CD8-positive, alpha-beta T cell (primary cell): ENCODE measurements at regions of chr2 and their contacts with region 1.

Region 1: GRCh38 chr2:20350753-20351554 is at the start of gene PUM2:
- DNase-seq: peak; percentile 89 to 99 (median 96)
- ATAC-seq: peak; percentile 79
- H3K4me3 ChIP-seq: peak within 1 kb of the TSS; percentile 75 to 82
- H3K4me3 Mint-ChIP-seq: no peak within 1 kb of the TSS
- H3K27ac ChIP-seq: peak within 1 kb of the TSS; percentile 89 to 94
- H3K27ac Mint-ChIP-seq: peak within 1 kb of the TSS; percentile 82
- H3K4me1 ChIP-seq: peaks cover 47% of the 10 kb centered on the region
- H3K4me1 Mint-ChIP-seq: peaks cover 39% of the 10 kb centered on the region
- H3K27me3 ChIP-seq: no peaks in the 10 kb centered on the region
- H3K27me3 Mint-ChIP-seq: no peaks in the 10 kb centered on the region
- CTCF ChIP-seq: no peak
- total RNA-seq, gene PUM2: 91.3 to 93.5 TPM

Region 2: DNA sequence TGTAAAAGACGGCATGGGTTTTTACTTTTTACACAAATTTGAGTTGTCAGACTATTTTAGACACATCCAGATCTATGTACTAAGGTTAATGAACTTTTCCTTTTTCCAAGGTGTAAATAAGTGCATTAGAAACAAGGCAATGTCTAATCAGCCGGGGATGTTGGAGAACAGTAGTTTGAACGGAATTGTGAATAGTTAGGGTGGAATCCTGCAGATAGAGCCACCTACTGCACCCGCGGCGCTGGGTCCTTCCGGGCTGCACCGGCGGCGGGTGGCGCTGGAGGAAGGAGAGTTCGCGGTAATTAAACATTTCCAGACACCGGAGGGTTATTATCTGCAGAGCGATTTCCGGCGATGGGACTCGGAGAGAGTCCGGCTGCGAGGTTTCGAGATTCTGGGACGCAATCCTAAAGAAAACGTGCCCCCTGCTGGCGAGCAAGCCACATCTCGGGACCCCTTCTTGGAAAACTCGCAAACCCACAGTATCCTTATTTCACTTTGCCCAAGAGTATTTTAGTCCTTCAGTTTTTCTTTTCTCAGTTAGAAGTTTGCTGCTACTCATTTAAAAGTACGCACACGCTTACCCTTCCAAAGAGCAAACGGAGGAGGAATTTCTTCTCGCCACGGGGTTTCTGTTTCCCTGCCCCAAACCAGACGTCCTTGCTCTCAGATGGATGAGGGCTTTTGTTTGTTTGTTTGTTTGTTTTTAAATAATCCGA is 988.0 kb before region 1 on chr2:
- CTCF ChIA-PET with region 1: no interaction called
- POLR2A ChIA-PET with region 1: no interaction called
- intact Hi-C with region 1: loop called in 1 of 2 experiments (anchors 5 kb)
- DNase-seq: peak in 6 of 9 experiments; percentile 29 to 74 (median 52)
- ATAC-seq: peak; percentile 48
- H3K4me3 ChIP-seq: peak overlapping the region; percentile 67 to 70
- H3K4me3 Mint-ChIP-seq: peak overlapping the region; percentile 93
- H3K27ac ChIP-seq: no peak overlapping the region
- H3K27ac Mint-ChIP-seq: peak overlapping the region; percentile 68
- H3K4me1 ChIP-seq: peaks cover 36% of the 10 kb centered on the region
- H3K4me1 Mint-ChIP-seq: peaks cover 37% of the 10 kb centered on the region
- H3K27me3 ChIP-seq: peaks cover 28 to 33% of the 10 kb centered on the region in 2 experiments
- H3K27me3 Mint-ChIP-seq: peaks cover 33% of the 10 kb centered on the region
- CTCF ChIP-seq: peak; percentile 38

Region 3: DNA sequence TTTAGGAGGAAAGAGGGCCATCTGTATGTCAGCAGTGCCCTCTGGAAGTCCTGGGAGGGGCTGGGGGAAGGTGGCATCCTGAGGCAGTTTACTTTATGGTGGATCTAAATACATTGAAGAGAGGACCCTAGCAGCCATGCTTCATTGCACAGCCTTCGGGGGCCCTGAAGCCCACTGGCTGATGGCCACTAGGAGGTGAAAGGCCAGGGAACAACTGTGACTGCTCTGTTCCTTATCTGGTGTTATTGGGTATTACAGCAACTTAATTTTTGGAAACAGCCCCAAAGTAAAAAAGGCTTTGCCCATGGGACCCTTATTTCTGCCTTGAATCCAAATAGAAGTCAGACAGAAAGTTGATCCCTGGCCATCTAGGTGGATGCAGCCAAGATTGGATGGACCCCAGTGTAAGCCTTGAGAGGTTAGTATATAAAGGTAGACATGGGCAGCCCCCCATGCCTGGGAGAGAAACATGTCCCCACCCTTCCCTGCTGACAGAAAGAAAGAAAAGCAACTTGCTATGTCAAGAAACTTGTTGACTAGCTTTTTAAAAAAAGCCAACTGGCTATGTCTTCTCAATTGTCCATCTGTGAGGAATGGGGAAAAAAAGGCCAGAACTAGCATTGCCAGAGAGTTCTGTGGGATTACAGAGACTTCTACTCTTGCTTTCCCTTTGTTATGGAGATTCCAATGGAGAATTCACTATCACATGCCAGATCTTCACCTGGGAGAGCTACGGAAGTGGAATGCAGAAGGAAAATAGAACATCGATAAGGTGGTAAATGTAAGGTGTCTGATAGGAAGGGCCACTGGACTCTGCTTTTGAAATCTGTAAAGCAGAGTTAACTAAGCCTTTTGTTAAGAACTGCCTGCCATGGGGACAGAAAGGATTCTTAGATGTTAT is 933.9 kb before region 1 on chr2:
- CTCF ChIA-PET with region 1: no interaction called
- POLR2A ChIA-PET with region 1: no interaction called
- intact Hi-C with region 1: no loop called
- DNase-seq: no peak
- ATAC-seq: no peak
- H3K4me3 ChIP-seq: no peak overlapping the region
- H3K4me3 Mint-ChIP-seq: no peak overlapping the region
- H3K27ac ChIP-seq: no peak overlapping the region
- H3K27ac Mint-ChIP-seq: no peak overlapping the region
- H3K4me1 ChIP-seq: no peaks in the 10 kb centered on the region
- H3K4me1 Mint-ChIP-seq: no peaks in the 10 kb centered on the region
- H3K27me3 ChIP-seq: peaks cover 2 to 3% of the 10 kb centered on the region in 2 experiments
- H3K27me3 Mint-ChIP-seq: peaks cover 21% of the 10 kb centered on the region
- CTCF ChIP-seq: no peak

Region 4: DNA sequence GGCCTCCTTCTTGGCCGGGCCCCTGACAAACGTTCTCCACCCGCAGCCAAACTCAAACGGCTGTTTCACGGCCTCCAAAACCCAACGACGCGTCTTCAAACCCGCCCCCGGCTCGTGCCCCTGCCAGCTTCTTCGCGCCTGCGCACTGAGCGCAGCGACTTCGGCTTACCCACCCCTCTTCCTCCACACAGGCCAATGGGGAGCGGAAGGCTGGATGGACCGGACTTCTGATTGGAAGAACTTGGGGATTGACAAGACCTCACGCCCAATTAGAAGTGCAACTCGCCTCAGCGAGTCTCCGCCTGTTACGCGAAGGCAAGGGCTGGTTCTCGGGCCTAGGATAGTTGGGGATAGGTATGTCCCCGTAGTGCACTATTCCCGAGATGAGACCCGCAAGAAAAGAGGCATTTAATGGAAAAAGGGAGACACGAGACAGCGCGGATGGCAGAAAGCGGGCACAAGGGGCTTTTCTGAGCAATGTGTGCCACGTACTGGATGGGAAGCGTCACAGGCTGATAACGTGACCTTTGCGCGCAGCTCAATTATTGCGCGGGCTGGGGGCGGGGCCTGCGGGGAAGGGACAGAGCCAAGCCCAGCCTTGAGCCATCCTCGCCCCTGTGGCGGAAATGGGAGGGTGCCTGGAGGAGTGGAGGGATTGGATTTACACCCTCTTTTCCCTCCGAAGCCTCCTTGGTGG is 299.3 kb before region 1 on chr2 and contains the start of gene LAPTM4A:
- CTCF ChIA-PET with region 1: no interaction called
- POLR2A ChIA-PET with region 1: no interaction called
- intact Hi-C with region 1: loop called (anchors 1 to 10 kb)
- DNase-seq: peak; percentile 95 to 100 (median 97)
- ATAC-seq: peak; percentile 88
- H3K4me3 ChIP-seq: peak within 1 kb of the TSS; percentile 82 to 90
- H3K4me3 Mint-ChIP-seq: no peak within 1 kb of the TSS
- H3K27ac ChIP-seq: peak within 1 kb of the TSS; percentile 99
- H3K27ac Mint-ChIP-seq: no peak within 1 kb of the TSS
- H3K4me1 ChIP-seq: peaks cover 28% of the 10 kb centered on the region
- H3K4me1 Mint-ChIP-seq: peaks cover 31% of the 10 kb centered on the region
- H3K27me3 ChIP-seq: no peaks in the 10 kb centered on the region
- H3K27me3 Mint-ChIP-seq: peaks cover 19% of the 10 kb centered on the region
- CTCF ChIP-seq: no peak
- total RNA-seq, gene LAPTM4A: 92.4 to 98.8 TPM

Region 5: GRCh38 chr2:20326163-20326780 is 24.7 kb before region 1 on chr2:
- CTCF ChIA-PET with region 1: interaction called, 15 read pairs
- POLR2A ChIA-PET with region 1: interaction called, 6 read pairs
- intact Hi-C with region 1: loop called (anchors 1 kb)
- DNase-seq: peak in 8 of 9 experiments; percentile 19 to 71 (median 57)
- ATAC-seq: peak; percentile 84
- H3K4me3 ChIP-seq: no peak overlapping the region
- H3K4me3 Mint-ChIP-seq: no peak overlapping the region
- H3K27ac ChIP-seq: no peak overlapping the region
- H3K27ac Mint-ChIP-seq: peak overlapping the region; percentile 61
- H3K4me1 ChIP-seq: peaks cover 29% of the 10 kb centered on the region
- H3K4me1 Mint-ChIP-seq: peaks cover 76% of the 10 kb centered on the region
- H3K27me3 ChIP-seq: no peaks in the 10 kb centered on the region
- H3K27me3 Mint-ChIP-seq: no peaks in the 10 kb centered on the region
- CTCF ChIP-seq: peak; percentile 61

Region 6: DNA sequence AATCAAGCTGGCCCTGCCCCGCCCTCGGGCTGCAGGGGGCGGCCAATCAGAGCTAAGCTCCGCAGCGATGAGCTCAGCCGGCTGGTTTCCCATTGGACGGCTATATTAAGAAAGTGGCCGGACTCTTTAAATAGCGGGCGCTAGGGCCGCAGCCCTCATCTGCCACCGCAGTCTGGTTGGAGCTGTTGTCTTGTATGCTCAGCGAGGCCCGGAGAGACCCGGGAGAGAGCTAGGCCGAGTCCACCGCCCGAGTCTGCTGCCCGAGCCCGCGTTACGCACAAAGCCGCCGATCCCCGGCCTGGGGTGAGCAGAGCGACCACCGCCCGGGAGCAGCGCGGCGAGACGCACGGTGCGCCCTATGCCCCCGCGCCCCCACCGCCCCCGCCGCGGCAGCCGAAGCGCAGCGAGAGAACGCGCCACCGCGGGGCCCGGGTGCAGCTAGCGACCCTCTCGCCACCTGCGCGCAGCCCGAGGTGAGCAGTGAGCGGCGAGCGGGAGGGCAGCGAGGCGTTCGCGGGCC is 96.0 kb after region 1 on chr2 and contains the start of gene RHOB:
- CTCF ChIA-PET with region 1: interaction called, 3 read pairs
- POLR2A ChIA-PET with region 1: interaction called, 16 read pairs
- intact Hi-C with region 1: loop called (anchors 1 to 5 kb)
- DNase-seq: peak; percentile 77 to 97 (median 86)
- ATAC-seq: peak; percentile 96
- H3K4me3 ChIP-seq: peak within 1 kb of the TSS; percentile 71 to 77
- H3K4me3 Mint-ChIP-seq: peak within 1 kb of the TSS; percentile 85
- H3K27ac ChIP-seq: peak within 1 kb of the TSS; percentile 66 to 78
- H3K27ac Mint-ChIP-seq: peak within 1 kb of the TSS; percentile 57
- H3K4me1 ChIP-seq: peaks cover 17% of the 10 kb centered on the region
- H3K4me1 Mint-ChIP-seq: peaks cover 13% of the 10 kb centered on the region
- H3K27me3 ChIP-seq: peaks cover 0 to 7% of the 10 kb centered on the region in 2 experiments
- H3K27me3 Mint-ChIP-seq: peaks cover 10% of the 10 kb centered on the region
- CTCF ChIP-seq: no peak
- total RNA-seq, gene RHOB: 24.0 to 24.7 TPM

Region 7: DNA sequence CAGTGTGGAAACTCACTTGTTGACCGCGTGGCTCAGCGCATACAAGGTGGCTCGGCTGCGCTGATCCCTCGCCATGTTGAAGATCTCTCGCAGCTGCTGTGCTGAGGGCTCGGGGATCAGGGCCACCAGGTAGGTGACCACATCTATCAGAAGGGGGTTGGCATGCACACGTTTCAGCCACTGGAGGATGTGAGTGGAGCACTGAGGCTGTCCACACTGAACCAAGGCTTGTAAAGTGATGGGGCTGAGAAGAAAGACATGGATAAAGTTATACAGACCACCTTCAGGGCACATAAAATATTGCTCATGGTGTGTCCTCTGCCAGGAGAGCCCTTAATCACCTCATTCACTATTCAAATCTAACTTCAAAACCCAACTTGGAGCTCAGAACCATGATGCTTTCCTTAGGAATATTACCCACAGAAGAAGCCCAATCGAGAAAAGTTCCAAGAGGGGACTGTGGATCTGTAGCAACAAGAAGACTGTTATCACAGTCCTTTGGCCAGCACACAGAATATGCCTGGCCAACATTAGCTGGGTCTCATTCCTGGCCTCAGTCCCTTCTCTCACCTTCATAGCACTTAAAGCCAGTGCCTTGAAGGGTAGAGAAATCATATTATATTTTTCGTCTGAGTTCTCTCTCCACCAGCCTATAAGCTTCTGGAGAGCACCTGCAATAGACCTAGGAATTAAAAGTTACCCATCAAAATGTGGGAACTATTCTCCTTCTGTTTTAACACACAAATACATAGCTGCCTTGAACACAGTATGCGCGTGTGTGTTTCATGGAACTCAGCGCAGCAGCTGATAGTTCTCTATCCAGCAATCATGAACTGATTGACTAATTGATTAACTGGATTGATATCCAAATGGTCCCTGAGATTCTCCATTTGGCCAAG is 681.6 kb after region 1 on chr2:
- CTCF ChIA-PET with region 1: no interaction called
- POLR2A ChIA-PET with region 1: no interaction called
- intact Hi-C with region 1: no loop called
- DNase-seq: no peak
- ATAC-seq: no peak
- H3K4me3 ChIP-seq: no peak overlapping the region
- H3K4me3 Mint-ChIP-seq: no peak overlapping the region
- H3K27ac ChIP-seq: no peak overlapping the region
- H3K27ac Mint-ChIP-seq: no peak overlapping the region
- H3K4me1 ChIP-seq: no peaks in the 10 kb centered on the region
- H3K4me1 Mint-ChIP-seq: no peaks in the 10 kb centered on the region
- H3K27me3 ChIP-seq: no peaks in the 10 kb centered on the region
- H3K27me3 Mint-ChIP-seq: peaks cover 20% of the 10 kb centered on the region
- CTCF ChIP-seq: no peak